ENCODE measurements at regions of chr9 and their contacts with region 1.

Region 1: DNA sequence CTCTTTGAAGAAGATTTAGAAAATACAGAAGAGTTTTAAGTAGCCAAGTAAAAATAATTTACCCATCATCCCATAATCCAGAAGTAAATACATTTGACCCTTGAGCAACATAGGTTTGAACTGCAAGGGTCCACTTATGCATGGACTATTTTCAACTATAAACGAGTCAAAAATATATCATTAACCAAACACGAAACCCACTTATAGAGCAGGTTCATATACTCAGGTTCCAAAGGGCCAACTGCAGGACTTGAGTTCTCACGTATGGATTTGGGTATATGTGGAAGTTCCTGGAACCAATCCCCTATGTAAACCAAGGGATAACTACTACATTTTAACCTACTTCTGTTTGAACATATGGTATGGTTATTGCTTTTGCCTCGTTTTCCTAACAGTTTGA is 5.8 kb downstream of the ABITRAM start:
- DNase-seq: no peak
- ATAC-seq: no peak
- H3K4me3 ChIP-seq: no peak overlapping the region
- H3K27ac ChIP-seq: no peak overlapping the region
- H3K4me1 ChIP-seq: peaks cover 8% of the 10 kb centered on the region
- CTCF ChIP-seq: no peak
- EP300 ChIP-seq: no peak
- POLR2A ChIP-seq: no peak
- RAD21 ChIP-seq: no peak

Region 2: GRCh38 chr9:108953983-108954574 is 14.1 kb after region 1 on chr9:
- CTCF ChIA-PET with region 1: interaction called, 39 read pairs
- POLR2A ChIA-PET with region 1: no interaction called
- DNase-seq: peak; percentile 43 to 57
- ATAC-seq: peak in 1 of 2 experiments; percentile 64; a peak in 2 of 6 replicates
- H3K4me3 ChIP-seq: no peak overlapping the region
- H3K27ac ChIP-seq: no peak overlapping the region
- H3K4me1 ChIP-seq: no peaks in the 10 kb centered on the region
- CTCF ChIP-seq: peak; percentile 77
- EP300 ChIP-seq: no peak
- POLR2A ChIP-seq: no peak
- RAD21 ChIP-seq: peak; percentile 56 to 62

Region 3: GRCh38 chr9:108983885-108984284 is 43.9 kb after region 1 on chr9:
- CTCF ChIA-PET with region 1: no interaction called
- POLR2A ChIA-PET with region 1: no interaction called
- DNase-seq: no peak
- ATAC-seq: no peak
- H3K4me3 ChIP-seq: no peak overlapping the region
- H3K27ac ChIP-seq: no peak overlapping the region
- H3K4me1 ChIP-seq: no peaks in the 10 kb centered on the region
- CTCF ChIP-seq: no peak
- EP300 ChIP-seq: no peak
- POLR2A ChIP-seq: no peak
- RAD21 ChIP-seq: no peak

Measured in A549 (cell line).